ENCODE measurements at regions of chr15 and their contacts with region 1.

Region 1: DNA sequence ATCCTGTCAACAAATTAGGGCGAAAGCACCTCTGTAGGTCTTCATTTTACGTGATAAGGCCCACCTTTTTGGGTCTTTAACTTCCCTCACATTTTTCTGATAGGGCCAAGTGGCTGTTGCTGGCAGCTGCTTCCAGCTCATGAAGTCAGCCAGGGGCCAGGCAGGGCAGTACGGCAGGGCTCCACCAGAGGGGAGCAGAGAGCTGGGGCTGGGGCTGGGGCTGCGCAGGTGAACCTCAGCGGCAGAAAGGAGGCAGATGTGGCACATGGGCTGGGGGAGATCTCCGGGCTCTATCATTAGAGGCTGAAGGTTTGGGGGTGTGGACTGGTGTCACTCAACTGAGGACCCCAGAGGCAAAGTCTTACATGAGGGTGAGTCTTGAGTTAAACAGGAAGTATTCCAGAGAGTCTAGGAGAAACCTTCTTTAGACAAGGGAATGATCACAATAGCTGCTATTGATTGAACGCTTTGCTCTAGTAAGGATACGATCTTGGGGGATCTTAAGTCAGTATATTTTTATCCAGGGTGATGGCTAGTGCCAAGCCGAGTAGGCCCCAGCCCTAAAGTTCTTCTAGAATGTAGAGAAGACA is 62.8 kb upstream of the MEX3B start:
- DNase-seq: peak; percentile 81
- H3K4me3 Mint-ChIP-seq: no peak overlapping the region
- H3K27ac Mint-ChIP-seq: no peak overlapping the region
- H3K4me1 Mint-ChIP-seq: no peaks in the 10 kb centered on the region
- H3K27me3 Mint-ChIP-seq: peaks cover 15% of the 10 kb centered on the region

Region 2: DNA sequence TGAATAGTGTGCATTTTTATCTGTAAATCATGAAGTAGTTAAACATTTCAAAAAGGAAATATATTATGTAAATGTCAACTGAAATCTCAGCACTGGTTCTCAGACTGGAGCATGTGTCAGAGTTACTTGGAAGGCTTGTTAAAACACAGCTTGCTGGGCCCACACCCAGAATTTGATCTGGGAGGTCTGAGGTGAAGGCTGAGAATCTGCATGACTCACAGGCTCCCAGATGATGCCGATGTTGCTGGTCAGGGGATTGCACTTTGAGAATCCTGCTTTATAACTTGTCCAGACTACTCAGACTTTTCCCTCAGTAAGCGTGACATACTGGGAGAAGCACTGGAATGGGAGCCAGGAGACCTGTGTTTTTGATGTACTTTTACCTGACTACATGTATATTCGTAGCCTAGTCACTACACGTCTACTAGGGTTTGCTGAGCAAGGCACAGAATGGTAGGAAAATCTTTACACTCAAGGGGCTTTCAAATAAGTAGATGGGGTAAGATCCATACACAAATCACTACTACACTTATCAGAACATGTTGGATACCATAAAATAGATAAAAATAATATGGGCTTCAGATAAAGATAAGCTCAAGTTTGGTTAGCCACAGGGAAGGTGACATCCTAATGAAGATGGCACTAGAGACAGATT is 14.3 kb after region 1 on chr15:
- CTCF ChIA-PET with region 1: interaction called, 15 read pairs
- DNase-seq: no peak
- H3K4me3 Mint-ChIP-seq: no peak overlapping the region
- H3K27ac Mint-ChIP-seq: no peak overlapping the region
- H3K4me1 Mint-ChIP-seq: peaks cover 6% of the 10 kb centered on the region
- H3K27me3 Mint-ChIP-seq: no peaks in the 10 kb centered on the region

Region 3: DNA sequence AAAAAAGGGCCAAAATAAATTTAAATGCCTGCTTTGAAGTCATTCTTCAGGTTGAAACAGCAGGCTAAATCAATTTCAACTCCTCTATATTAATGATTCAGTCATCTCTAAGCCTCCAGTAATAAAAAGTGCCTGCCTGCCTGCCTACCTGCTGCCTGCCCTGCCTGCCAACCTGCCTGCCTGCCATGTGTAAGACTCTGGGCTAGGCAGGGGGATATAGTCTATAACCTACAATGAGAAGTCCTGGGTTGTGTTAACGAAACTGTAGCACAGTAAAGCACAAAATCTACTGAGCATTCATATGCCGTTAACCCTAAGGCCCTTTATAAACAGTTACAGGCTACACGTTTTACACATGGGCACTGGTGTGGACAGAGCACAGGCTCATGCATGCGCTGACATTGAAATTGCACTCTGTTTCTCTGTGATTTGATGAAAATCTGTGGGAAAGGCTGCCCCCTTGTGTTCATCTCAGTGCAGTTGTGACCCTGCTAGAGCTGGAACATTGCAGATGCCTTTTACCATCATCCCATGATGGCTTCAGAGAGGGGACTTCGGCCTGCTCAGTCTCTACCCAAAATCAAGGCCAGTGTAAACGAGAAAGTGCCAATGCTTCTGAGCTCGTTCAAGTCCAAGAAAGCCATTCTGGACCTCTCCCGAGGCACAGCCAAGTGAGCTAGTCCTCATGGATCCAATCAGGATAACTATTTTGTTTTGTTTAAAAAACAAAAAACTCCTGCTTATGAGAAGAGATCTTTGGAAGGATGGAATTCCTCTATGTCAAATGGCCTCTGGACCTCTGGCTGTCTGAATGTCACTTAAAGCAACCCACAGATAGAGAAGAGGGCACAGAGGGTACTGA is 89.4 kb after region 1 on chr15:
- CTCF ChIA-PET with region 1: interaction called, 23 read pairs
- DNase-seq: peak; percentile 74
- H3K4me3 Mint-ChIP-seq: no peak overlapping the region
- H3K27ac Mint-ChIP-seq: no peak overlapping the region
- H3K4me1 Mint-ChIP-seq: no peaks in the 10 kb centered on the region
- H3K27me3 Mint-ChIP-seq: no peaks in the 10 kb centered on the region

Measured in activated naive CD4-positive, alpha-beta T cell treated with anti-CD3 and anti-CD28 coated beads, Interleukin-2, amount 10 ng/mL, durations not matched to agents 7 days and 5 days (primary cell).